ENCODE measurements at regions of chr11 and their contacts with region 1.

Region 1: DNA sequence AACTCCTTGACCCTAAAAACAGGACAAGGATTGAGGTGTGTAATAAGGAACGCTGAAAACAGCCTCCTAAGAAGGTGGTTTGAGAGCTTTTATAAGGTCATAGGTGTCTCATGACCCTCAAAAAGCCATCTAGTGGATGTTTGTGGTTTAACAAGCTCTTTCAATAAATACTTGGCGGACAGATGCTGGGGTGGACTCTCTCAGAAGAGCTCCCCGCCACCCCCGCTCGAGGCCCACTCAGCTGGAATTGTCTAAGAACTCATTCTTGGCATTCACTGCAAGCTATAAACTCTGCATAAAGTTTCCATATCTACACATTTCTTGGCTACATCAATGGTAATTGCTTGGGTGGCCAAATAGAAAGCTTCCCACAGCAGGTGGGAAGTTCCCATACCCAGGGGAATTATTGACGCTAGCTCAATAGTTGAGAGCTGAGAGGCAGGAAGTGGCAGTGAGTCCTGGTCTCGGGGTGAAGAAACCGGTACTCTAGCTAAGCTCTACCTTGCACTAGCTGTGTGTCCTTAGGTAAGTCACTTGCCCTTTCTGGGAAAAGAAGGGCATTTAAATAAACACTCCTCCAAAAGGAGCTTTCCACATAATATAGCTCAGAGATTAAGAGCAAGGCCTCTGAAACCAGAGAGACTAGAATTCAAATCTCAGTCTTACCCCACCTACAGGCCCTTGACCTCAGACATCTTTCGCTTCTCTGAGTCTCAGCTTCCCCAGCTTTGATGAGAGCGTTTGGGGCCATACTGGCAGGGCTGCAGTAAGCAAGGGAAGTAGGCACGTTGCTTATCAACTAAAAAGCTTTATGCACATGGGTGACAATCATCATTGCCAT is 6.4 kb downstream of the MS4A15 start:
- DNase-seq: peak in 1 of 2 experiments; percentile 44
- H3K4me3 ChIP-seq: no peak overlapping the region
- H3K4me3 Mint-ChIP-seq: no peak overlapping the region
- H3K27ac Mint-ChIP-seq: no peak overlapping the region
- H3K4me1 ChIP-seq: peaks cover 18% of the 10 kb centered on the region
- H3K4me1 Mint-ChIP-seq: peaks cover 19% of the 10 kb centered on the region
- H3K27me3 ChIP-seq: no peaks in the 10 kb centered on the region
- H3K27me3 Mint-ChIP-seq: no peaks in the 10 kb centered on the region
- CTCF ChIP-seq: peak; percentile 47 to 52

Region 2: DNA sequence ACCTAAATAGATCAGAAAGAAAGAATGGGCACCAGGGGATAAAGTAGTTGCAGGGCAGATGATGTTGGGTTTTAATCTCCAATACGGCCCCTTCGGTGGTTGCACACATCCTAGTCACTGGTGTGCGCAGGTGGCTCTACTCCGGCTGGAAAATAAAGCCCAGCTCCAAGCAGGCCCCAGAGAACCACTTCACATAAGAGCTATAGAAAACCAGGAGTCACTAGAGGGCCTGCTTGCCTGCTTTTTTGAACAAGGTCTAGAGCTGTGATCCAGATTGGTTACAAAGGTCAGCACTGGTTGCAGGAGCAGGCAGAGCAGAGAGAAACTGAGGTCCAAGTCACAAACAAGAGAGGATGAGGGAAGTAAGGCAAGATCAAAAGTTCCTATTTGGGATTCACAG is 105.2 kb before region 1 on chr11:
- CTCF ChIA-PET with region 1: interaction called, 25 read pairs
- POLR2A ChIA-PET with region 1: no interaction called
- intact Hi-C with region 1: no loop called
- DNase-seq: peak in 1 of 2 experiments; percentile 20
- H3K4me3 ChIP-seq: no peak overlapping the region
- H3K4me3 Mint-ChIP-seq: no peak overlapping the region
- H3K27ac Mint-ChIP-seq: no peak overlapping the region
- H3K4me1 ChIP-seq: no peaks in the 10 kb centered on the region
- H3K4me1 Mint-ChIP-seq: peaks cover 17% of the 10 kb centered on the region
- H3K27me3 ChIP-seq: no peaks in the 10 kb centered on the region
- H3K27me3 Mint-ChIP-seq: peaks cover 4% of the 10 kb centered on the region
- CTCF ChIP-seq: peak; percentile 14 to 24

Region 3: GRCh38 chr11:60710482-60710881 is 52.6 kb before region 1 on chr11:
- CTCF ChIA-PET with region 1: interaction called, 16 read pairs
- POLR2A ChIA-PET with region 1: no interaction called
- intact Hi-C with region 1: loop called (anchors 1 kb)
- DNase-seq: peak; percentile 53 to 56
- H3K4me3 ChIP-seq: no peak overlapping the region
- H3K4me3 Mint-ChIP-seq: no peak overlapping the region
- H3K27ac Mint-ChIP-seq: no peak overlapping the region
- H3K4me1 ChIP-seq: peaks cover 55% of the 10 kb centered on the region
- H3K4me1 Mint-ChIP-seq: peaks cover 15% of the 10 kb centered on the region
- H3K27me3 ChIP-seq: no peaks in the 10 kb centered on the region
- H3K27me3 Mint-ChIP-seq: no peaks in the 10 kb centered on the region
- CTCF ChIP-seq: peak; percentile 16 to 40

Region 4: GRCh38 chr11:60880643-60881282 is 117.7 kb after region 1 on chr11:
- CTCF ChIA-PET with region 1: no interaction called
- POLR2A ChIA-PET with region 1: no interaction called
- intact Hi-C with region 1: no loop called
- DNase-seq: no peak
- H3K4me3 ChIP-seq: no peak overlapping the region
- H3K4me3 Mint-ChIP-seq: no peak overlapping the region
- H3K27ac Mint-ChIP-seq: no peak overlapping the region
- H3K4me1 ChIP-seq: no peaks in the 10 kb centered on the region
- H3K4me1 Mint-ChIP-seq: no peaks in the 10 kb centered on the region
- H3K27me3 ChIP-seq: no peaks in the 10 kb centered on the region
- H3K27me3 Mint-ChIP-seq: no peaks in the 10 kb centered on the region
- CTCF ChIP-seq: no peak

Region 5: DNA sequence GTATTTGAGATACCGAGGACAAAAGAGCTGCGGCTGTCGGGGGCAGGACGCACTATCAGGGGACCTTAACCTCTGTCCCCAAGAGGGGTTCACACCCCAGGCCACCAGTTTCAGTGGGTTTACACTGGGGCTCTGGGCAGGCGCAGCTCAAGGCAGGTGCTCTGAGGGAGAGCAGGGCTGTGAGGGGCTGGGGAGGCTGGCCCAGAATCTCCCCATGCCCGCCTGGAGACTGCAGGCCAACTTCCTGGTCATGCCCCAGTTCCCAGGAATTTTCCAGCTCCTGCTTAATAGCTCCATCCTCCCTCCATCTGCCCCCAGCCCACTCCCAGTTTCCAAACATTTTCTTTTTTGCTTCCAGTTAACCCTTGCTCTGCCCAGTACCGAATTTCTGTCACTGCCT is 432.6 kb after region 1 on chr11:
- CTCF ChIA-PET with region 1: interaction called, 11 read pairs
- POLR2A ChIA-PET with region 1: no interaction called
- intact Hi-C with region 1: no loop called
- DNase-seq: no peak
- H3K4me3 ChIP-seq: no peak overlapping the region
- H3K4me3 Mint-ChIP-seq: no peak overlapping the region
- H3K27ac Mint-ChIP-seq: no peak overlapping the region
- H3K4me1 ChIP-seq: no peaks in the 10 kb centered on the region; the same call in 1 of the 2 replicates
- H3K4me1 Mint-ChIP-seq: peaks cover 7% of the 10 kb centered on the region
- H3K27me3 ChIP-seq: no peaks in the 10 kb centered on the region
- H3K27me3 Mint-ChIP-seq: peaks cover 2% of the 10 kb centered on the region
- CTCF ChIP-seq: no peak

Measured in Caco-2 (cell line).